Mammary epithelial cell (primary cell): ENCODE measurements at regions of chr12 and their contacts with region 1.

Region 1: DNA sequence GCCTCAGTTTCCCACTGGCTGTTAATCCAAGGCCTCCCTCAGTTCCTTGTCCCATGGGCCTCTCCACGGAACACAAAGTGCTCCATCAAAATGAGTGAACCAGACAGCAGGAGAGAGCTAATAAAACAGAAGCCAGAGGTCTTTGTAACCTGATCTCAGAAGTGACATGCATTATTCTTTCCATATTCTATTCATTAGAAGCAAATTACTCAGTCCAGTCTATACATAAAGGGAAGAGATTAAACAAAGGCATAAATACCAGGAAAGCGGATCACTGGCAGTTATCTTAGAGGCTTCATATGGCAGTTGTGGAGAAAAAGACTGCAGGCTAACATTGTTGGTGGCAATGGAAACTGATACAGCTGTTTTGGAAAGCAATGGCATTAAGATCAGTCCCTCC is 170.6 kb upstream of the GARIN6 start:
- DNase-seq: no peak
- H3K4me3 ChIP-seq: no peak overlapping the region
- H3K27ac ChIP-seq: no peak overlapping the region
- H3K4me1 ChIP-seq: no peaks in the 10 kb centered on the region
- H3K27me3 ChIP-seq: no peaks in the 10 kb centered on the region
- CTCF ChIP-seq: no peak

Region 2: GRCh38 chr12:100632445-100632892 is 1155.5 kb after region 1 on chr12:
- CTCF ChIA-PET with region 1: interaction called, 34 read pairs
- dilution Hi-C with region 1: no loop called
- in situ Hi-C with region 1: no loop called
- intact Hi-C with region 1: no loop called
- DNase-seq: no peak
- H3K4me3 ChIP-seq: no peak overlapping the region
- H3K27ac ChIP-seq: no peak overlapping the region
- H3K4me1 ChIP-seq: no peaks in the 10 kb centered on the region
- H3K27me3 ChIP-seq: no peaks in the 10 kb centered on the region
- CTCF ChIP-seq: no peak